Activated CD4-positive, alpha-beta memory T cell treated with anti-CD3 and anti-CD28 coated beads for 36 hours (primary cell): ENCODE measurements at regions of chr10 and their contacts with region 1.

Region 1: DNA sequence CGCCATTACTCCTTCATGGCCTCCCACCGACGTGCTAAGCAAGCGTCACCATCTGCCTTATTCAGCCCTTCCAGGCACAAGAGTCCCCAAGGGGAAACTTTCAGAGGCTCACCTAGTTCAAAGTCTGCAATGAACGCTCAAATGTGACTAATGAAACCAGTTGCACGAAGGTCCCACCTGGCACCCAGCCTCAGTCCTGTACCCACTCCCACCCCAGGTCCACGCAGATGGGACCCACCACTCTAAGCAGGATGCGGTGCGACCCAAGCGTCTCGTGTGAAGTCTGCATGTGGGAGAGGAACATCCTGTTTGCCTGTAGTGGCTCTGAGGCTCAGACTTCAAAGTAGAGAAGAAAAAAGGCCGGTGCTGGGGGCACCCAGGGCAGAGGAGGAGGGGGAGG is 40.3 kb downstream of the RGS10 start:
- DNase-seq: peak; percentile 88
- H3K4me3 Mint-ChIP-seq: peak overlapping the region; percentile 59
- H3K27ac Mint-ChIP-seq: peak overlapping the region; percentile 99
- H3K4me1 Mint-ChIP-seq: peaks cover 83% of the 10 kb centered on the region
- H3K27me3 Mint-ChIP-seq: no peaks in the 10 kb centered on the region

Region 2: DNA sequence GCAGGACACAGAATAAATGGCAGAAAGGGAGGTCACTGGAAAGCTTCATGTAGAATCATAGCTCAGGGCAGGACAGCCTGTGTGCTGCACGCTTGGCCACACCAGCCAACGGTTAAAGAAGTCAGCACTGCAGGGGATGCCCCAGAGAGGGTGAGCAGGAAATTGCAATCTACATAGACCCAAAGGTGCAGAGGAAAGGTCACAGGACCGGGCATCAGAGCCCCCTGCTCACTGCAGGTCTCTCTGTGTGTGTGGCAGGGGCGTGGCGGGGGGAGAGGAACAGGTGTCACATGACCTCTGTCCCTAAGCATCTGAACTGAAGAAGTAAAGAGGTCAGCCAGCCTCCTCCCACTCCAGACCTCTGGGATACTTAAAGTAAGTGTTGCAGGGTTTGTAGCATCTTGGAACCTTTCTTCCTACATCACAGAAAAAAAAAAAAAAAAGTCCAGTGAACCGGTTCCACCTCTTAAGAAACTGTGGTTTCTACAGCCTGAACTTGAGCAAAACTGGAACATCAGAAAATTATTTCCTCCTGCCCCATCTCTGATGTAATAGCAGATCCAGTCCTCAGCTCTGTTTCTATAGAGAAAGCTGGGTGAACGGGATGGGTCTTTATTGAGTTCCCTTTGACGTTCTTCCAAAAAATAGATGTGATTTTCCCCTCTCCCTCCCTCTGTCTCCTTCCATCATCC is 24.0 kb before region 1 on chr10:
- CTCF ChIA-PET with region 1: no interaction called
- POLR2A ChIA-PET with region 1: no interaction called
- intact Hi-C with region 1: loop called (anchors 1 kb)
- DNase-seq: peak; percentile 67
- H3K4me3 Mint-ChIP-seq: peak overlapping the region; percentile 17
- H3K27ac Mint-ChIP-seq: peak overlapping the region; percentile 49
- H3K4me1 Mint-ChIP-seq: peaks cover 33% of the 10 kb centered on the region
- H3K27me3 Mint-ChIP-seq: no peaks in the 10 kb centered on the region

Region 3: DNA sequence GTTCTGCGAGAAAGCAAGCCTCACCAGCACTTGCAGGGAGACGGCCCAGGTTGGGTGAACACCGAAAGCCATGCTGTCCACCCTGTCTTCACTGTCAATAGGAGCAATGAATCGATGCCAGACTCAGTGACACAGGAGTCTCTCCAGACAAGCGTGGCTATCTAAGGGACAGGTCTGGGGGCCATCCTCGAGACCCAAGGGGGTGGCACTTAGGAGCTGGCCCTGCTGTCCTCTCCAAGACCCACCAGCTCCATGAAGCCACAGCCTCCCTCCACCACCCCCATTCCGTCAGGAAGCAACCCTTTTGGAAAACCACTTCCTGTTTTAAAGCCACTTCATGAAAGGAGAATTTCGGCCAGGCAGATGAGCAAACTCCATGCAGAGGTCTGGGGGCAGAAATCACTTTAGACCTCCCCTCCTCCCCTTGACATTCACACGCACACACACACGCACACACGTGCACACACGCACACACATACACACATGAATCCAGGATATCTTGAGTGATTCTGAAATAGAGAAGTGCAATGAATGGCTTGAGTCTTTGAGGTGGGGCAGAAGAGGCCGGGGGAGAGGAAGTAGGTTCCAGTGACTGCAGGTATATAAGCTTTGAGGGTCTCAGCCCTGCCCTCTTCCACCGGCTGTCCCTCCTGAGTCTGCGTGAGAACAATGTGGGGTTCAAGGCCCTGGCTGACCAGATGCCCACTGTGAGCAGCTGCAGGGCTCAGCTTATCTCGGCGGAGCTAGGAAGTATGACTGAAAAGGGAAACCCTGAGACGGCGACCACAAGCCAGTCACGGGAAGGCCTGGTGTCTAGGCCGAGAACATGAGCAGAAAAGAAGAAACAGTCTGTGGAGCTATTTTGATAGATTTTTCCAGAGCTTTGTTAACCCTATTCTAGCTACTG is 15.3 kb after region 1 on chr10:
- CTCF ChIA-PET with region 1: interaction called, 7 read pairs
- POLR2A ChIA-PET with region 1: interaction called, 7 read pairs
- intact Hi-C with region 1: loop called (anchors 1 kb)
- DNase-seq: peak; percentile 85
- H3K4me3 Mint-ChIP-seq: peak overlapping the region; percentile 55
- H3K27ac Mint-ChIP-seq: peak overlapping the region; percentile 85
- H3K4me1 Mint-ChIP-seq: peaks cover 59% of the 10 kb centered on the region
- H3K27me3 Mint-ChIP-seq: no peaks in the 10 kb centered on the region

Region 4: DNA sequence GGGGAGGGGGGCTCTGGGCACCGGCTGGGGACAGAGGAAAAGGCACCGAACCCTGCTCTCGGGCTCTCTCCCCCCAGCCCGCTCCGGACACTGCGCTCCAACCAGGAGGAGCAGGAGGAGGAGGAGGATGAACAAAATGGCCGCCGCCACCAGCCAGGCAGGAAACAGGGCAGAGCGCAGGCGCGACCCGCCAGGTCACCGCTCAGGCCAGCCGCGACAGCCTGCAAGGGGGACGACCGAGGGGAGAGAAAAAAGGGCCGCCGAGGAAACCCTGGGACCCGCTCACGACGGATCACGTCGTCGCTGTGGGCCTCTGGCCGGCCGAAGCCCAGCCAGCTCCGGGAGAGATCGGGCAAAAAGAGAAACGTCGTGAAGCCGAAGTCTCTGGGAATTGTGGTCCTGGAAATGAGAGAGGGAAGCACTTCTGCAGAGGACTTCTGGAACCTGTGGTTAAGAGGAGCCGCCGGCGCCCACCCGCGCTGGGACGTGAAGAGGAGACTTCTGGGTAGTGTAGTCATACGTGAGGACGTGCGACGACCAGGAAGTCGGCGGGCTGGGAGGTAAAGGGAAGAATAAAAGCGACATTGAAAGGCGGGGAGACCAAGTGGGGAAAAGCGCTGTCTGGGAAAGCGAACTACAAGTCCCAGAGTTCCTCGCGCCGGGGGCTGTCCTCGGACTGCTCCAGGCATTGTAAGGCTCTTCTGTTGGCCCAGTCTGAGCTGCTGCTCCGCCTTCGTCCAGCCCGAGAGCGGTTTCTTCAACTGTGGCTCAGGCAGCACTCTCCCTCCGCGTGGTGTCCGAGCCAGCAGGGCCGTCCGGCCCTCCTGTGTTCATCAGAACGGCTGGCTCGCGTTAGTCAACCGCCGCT is 94.6 kb after region 1 on chr10 and contains the start of gene TIAL1:
- CTCF ChIA-PET with region 1: no interaction called
- POLR2A ChIA-PET with region 1: no interaction called
- intact Hi-C with region 1: loop called (anchors 1 kb)
- DNase-seq: peak; percentile 97
- H3K4me3 Mint-ChIP-seq: peak within 1 kb of the TSS; percentile 89
- H3K27ac Mint-ChIP-seq: peak within 1 kb of the TSS; percentile 97
- H3K4me1 Mint-ChIP-seq: peaks cover 42% of the 10 kb centered on the region
- H3K27me3 Mint-ChIP-seq: no peaks in the 10 kb centered on the region
- total RNA-seq, gene TIAL1: 177 TPM